ENCODE measurements at regions of chr7 and their contacts with region 1.

Region 1: GRCh38 chr7:50632561-50633413 is 67.6 kb upstream of the DDC start:
- DNase-seq: peak; percentile 57 to 62 (median 60)
- H3K4me3 ChIP-seq: no peak overlapping the region
- H3K4me3 Mint-ChIP-seq: no peak overlapping the region
- H3K27ac ChIP-seq: no peak overlapping the region
- H3K27ac Mint-ChIP-seq: peak overlapping the region in 1 of 7 donors; percentile 15
- H3K4me1 ChIP-seq: no peaks in the 10 kb centered on the region
- H3K4me1 Mint-ChIP-seq: peaks cover 3 to 6% (median 5%) of the 10 kb centered on the region in 4 donors
- H3K27me3 ChIP-seq: no peaks in the 10 kb centered on the region
- H3K27me3 Mint-ChIP-seq: peaks cover 3 to 5% of the 10 kb centered on the region in 2 donors

Region 2: GRCh38 chr7:50142425-50143017 is 490.3 kb before region 1 on chr7:
- CTCF ChIA-PET with region 1: interaction called, 16 read pairs
- POLR2A ChIA-PET with region 1: no interaction called
- intact Hi-C with region 1: loop called (anchors 1 kb)
- DNase-seq: peak in 4 of 5 donors; percentile 57 to 63 (median 60)
- H3K4me3 ChIP-seq: no peak overlapping the region
- H3K4me3 Mint-ChIP-seq: peak overlapping the region; percentile 3 to 77 (median 49)
- H3K27ac ChIP-seq: no peak overlapping the region
- H3K27ac Mint-ChIP-seq: peak overlapping the region in 6 of 7 donors; percentile 0 to 93 (median 36)
- H3K4me1 ChIP-seq: peaks cover 26% of the 10 kb centered on the region
- H3K4me1 Mint-ChIP-seq: peaks cover 11 to 25% (median 18%) of the 10 kb centered on the region in 4 donors
- H3K27me3 ChIP-seq: no peaks in the 10 kb centered on the region
- H3K27me3 Mint-ChIP-seq: peaks cover 0 to 2% of the 10 kb centered on the region in 2 donors

Region 3: GRCh38 chr7:50562136-50562535 is 70.7 kb before region 1 on chr7:
- CTCF ChIA-PET with region 1: no interaction called
- POLR2A ChIA-PET with region 1: no interaction called
- intact Hi-C with region 1: no loop called
- DNase-seq: no peak
- H3K4me3 ChIP-seq: no peak overlapping the region
- H3K4me3 Mint-ChIP-seq: no peak overlapping the region
- H3K27ac ChIP-seq: no peak overlapping the region
- H3K27ac Mint-ChIP-seq: no peak overlapping the region
- H3K4me1 ChIP-seq: no peaks in the 10 kb centered on the region
- H3K4me1 Mint-ChIP-seq: no peaks in the 10 kb centered on the region
- H3K27me3 ChIP-seq: peaks cover 5% of the 10 kb centered on the region
- H3K27me3 Mint-ChIP-seq: peaks cover 20% of the 10 kb centered on the region in 2 donors

Region 4: GRCh38 chr7:50610521-50611277 is 22.1 kb before region 1 on chr7:
- CTCF ChIA-PET with region 1: interaction called, 154 read pairs
- POLR2A ChIA-PET with region 1: interaction called, 9 read pairs
- intact Hi-C with region 1: loop called (anchors 1 kb)
- DNase-seq: peak; percentile 61 to 79 (median 74)
- H3K4me3 ChIP-seq: peak overlapping the region in 1 of 2 donors; percentile 9
- H3K4me3 Mint-ChIP-seq: peak overlapping the region in 7 of 8 donors; percentile 17 to 76 (median 63)
- H3K27ac ChIP-seq: peak overlapping the region; percentile 31
- H3K27ac Mint-ChIP-seq: peak overlapping the region; percentile 54 to 94 (median 86)
- H3K4me1 ChIP-seq: peaks cover 48% of the 10 kb centered on the region
- H3K4me1 Mint-ChIP-seq: peaks cover 34 to 54% (median 45%) of the 10 kb centered on the region in 4 donors
- H3K27me3 ChIP-seq: no peaks in the 10 kb centered on the region
- H3K27me3 Mint-ChIP-seq: no peaks in the 10 kb centered on the region

Region 5: DNA sequence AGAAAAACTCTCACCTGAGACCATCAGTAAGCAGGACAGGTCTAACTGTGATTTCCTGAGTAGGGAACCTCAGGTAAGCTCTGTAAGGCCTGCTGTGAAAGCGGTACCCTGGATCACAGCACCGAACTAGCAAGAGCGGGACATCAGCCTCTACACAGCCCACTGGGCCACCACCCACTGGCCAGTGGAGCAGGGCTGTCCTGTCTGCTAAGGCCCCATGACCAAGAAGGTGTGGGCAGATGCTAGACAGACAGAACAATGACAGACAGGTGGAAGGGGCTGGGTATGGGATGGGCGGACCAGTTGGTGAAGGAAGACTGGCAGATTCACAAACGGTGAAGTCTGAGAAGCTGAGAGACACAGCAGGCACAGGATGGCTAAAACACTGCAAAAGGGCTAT is 11.8 kb after region 1 on chr7:
- CTCF ChIA-PET with region 1: interaction called, 28 read pairs
- POLR2A ChIA-PET with region 1: no interaction called
- intact Hi-C with region 1: no loop called
- DNase-seq: no peak
- H3K4me3 ChIP-seq: no peak overlapping the region
- H3K4me3 Mint-ChIP-seq: no peak overlapping the region
- H3K27ac ChIP-seq: no peak overlapping the region
- H3K27ac Mint-ChIP-seq: no peak overlapping the region
- H3K4me1 ChIP-seq: no peaks in the 10 kb centered on the region
- H3K4me1 Mint-ChIP-seq: peaks cover 5 to 10% (median 7%) of the 10 kb centered on the region in 4 donors
- H3K27me3 ChIP-seq: no peaks in the 10 kb centered on the region
- H3K27me3 Mint-ChIP-seq: no peaks in the 10 kb centered on the region